Pancreas (tissue), 10 donors: ENCODE measurements at regions of chrX and their contacts with region 1.

Region 1: DNA sequence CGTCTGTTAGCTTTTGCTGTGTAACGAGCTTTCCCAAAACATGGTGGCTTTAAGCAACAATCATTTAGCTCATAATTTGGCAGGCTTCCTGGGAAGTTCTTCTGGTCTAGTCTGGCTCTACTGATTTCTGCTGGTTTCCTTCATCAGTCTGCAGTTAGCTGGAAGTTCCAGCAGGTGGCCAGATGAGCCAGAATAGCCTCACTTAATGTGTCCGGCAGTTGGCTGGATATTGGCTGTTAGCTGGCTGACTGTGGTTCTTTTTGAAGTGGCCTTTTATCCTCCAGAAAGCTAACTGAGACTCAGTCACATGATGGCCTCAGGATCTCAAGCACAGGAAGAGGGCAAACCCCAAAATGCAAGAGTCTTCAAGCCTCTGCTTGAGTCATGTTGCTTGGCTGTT is 34.9 kb downstream of the FTHL17 start:
- DNase-seq: peak in 5 of 6 donors; percentile 9 to 60 (median 46)
- ATAC-seq: peak; percentile 70 to 94 (median 90)
- H3K4me3 ChIP-seq: no peak overlapping the region
- H3K27ac ChIP-seq: no peak overlapping the region
- H3K4me1 ChIP-seq: no peaks in the 10 kb centered on the region
- H3K27me3 ChIP-seq: peaks cover 0 to 9% (median 0%) of the 10 kb centered on the region in 4 donors
- CTCF ChIP-seq: peak; percentile 15 to 52 (median 30)

Region 2: DNA sequence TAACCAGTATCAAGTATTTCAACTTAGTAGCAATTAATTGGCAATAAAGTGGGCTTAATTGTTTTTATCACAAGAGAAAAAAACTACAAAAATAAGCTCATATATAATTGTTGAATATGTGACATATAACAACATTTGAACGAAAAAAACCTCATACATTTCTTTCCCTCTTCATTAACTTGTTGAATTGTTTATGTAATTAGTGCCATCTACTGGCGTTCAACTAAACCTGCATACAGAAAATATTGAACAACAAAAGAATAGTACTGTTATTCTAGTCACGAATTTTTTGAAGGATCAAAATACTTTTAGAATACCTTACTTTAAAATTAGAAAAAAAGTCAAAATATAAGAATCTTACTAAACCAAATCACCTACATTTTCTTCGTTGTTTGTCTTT is 621.5 kb after region 1 on chrX:
- intact Hi-C with region 1: loop called in 1 of 3 experiments (anchors 10 kb)
- DNase-seq: no peak
- ATAC-seq: peak in 2 of 4 donors; percentile 36 to 46
- H3K4me3 ChIP-seq: no peak overlapping the region
- H3K27ac ChIP-seq: no peak overlapping the region
- H3K4me1 ChIP-seq: no peaks in the 10 kb centered on the region
- H3K27me3 ChIP-seq: peaks cover 0 to 10% (median 0%) of the 10 kb centered on the region in 4 donors
- CTCF ChIP-seq: peak in 3 of 4 donors; percentile 19 to 54 (median 38)